ENCODE measurements at regions of chr10 and their contacts with region 1.

Region 1: DNA sequence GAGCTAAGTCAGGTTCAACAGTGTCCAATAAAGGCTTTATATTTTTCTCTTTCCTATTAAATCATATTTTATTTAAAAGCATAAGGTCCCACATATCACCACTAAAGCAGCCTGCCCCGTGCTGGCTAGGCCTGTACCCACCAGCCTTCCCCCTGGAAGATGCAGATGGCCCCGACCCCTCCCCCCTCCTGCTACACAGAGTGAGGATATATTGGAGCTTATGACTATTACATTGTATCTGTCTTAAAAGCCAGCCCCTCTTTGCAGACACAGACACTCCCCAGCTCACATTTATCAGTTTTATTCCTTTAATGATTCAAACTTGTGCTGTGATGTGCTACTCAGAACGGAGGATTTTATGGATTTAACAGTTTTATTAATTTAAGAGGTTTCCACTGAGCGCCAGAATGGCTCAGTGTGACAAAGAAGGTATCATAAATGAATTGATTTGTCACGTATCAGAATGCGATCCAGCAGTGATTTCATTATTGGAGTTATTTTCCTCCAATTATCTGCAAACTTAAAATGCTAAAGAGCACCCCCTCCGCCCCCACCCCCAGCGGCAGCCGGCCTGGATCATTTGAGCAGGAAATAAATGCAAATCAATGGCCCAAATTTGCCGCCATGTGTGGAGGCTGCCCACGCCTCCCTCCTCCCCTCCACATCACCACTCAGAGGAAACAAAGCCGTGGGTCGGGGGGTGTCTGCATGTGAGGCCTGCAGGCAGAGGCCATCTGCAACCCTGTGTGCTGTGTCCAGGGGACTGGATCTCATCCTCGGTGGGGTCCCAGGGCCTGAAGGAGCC is 72.6 kb upstream of the ZMIZ1 start:
- DNase-seq: no peak
- ATAC-seq: no peak
- H3K4me3 ChIP-seq: no peak overlapping the region
- H3K27ac ChIP-seq: no peak overlapping the region
- H3K4me1 ChIP-seq: no peaks in the 10 kb centered on the region
- H3K27me3 ChIP-seq: no peaks in the 10 kb centered on the region
- CTCF ChIP-seq: no peak

Region 2: DNA sequence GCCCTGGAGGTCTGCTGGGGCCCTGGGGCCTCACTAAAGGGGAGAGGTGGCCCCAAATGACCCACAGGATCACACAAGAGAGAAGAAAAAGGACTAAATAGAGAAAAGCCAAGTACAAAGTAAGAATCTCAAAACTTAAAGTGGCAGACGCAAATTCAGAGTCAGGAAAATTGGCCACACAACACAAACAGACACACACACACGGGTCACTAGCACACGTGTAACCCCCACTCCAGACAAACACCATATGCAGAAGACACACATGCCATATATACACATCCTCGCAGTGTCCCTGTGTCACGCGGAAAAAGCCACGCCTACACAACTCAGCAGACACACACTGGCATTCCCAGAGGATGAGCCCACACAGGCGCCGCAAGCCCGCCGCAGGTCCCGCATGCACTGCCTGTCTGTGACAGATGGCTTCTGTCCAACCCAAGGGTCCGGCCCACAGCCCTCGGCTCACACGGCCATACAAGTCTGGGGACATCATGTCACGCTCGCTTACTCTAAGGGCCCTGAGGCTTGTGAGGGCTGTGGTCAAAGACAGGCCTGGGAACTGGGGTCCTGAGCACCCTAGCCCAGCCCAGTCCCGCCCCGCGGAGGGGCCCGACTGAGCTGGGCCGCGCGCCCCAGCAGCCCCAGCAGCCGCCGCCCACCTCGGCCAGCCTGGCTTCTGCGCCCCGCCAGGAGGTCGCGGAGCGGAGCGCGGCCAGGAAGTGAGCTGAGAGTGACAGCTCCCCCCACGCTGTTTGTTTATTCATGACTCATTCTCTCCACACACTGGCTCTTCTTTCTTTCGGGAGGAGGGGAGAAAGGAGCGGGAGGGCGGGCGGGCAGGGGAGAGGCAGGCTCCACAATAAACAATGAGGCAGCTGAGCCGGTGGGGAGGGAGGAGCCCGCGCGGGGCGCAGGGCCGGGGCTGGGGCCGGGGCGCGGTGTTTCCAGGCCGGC is 23.0 kb before region 1 on chr10:
- CTCF ChIA-PET with region 1: no interaction called
- POLR2A ChIA-PET with region 1: no interaction called
- in situ Hi-C with region 1: no loop called
- intact Hi-C with region 1: no loop called
- DNase-seq: peak; percentile 70
- ATAC-seq: peak; percentile 82
- H3K4me3 ChIP-seq: peak overlapping the region; percentile 44 to 56
- H3K27ac ChIP-seq: peak overlapping the region; percentile 90
- H3K4me1 ChIP-seq: peaks cover 34% of the 10 kb centered on the region
- H3K27me3 ChIP-seq: no peaks in the 10 kb centered on the region
- CTCF ChIP-seq: no peak

Region 3: DNA sequence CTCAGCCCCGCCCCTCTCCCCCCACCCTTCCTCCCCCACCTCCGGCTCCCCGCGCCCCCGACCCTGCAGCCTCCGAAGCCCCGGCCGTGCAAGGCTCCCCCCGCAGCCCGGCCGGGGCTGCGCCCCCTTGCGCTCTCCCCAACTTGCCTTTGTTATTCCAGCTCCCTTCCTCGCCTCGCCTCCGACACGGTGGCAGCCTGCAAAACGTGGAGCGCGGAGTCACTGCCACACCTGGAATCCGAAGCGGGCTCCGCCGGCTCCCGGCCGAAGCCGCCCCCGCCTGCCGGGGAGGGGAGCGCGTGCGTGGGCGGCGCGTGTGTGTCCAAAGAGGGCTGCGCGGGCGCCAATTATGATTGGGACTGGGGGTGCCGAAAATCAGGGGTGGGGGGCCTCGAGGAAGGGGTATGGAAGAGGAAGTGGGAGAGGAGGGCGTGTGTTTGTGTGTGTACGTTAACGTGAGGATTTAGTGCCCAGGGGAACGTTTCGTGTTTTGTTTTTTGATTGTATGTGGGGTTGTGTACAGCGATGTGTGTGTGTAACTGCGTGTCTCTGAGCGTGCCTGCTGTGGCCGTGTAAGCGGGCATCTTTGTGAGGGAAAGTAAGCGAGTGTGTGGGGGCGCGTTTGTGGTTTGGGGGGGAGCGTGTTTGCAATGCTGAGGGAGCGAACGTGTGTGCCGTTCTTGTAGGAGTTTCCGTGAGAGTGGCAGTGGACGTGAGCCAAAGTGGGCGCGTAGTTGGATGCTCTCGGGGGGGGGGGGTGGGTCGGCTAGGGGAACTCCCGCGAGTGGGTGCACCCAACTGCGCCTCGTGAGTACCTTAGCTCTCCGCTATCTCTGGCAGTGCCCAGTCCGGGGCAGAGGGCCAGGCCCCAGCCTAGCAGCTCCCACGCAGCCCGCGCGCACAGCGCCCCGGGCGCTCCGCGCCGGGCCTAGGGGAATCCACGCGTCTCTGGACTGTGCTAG is 71.3 kb after region 1 on chr10:
- CTCF ChIA-PET with region 1: no interaction called
- POLR2A ChIA-PET with region 1: no interaction called
- in situ Hi-C with region 1: no loop called
- intact Hi-C with region 1: no loop called
- DNase-seq: no peak
- ATAC-seq: no peak
- H3K4me3 ChIP-seq: peak overlapping the region; percentile 88 to 93
- H3K27ac ChIP-seq: peak overlapping the region; percentile 60
- H3K4me1 ChIP-seq: peaks cover 26% of the 10 kb centered on the region
- H3K27me3 ChIP-seq: no peaks in the 10 kb centered on the region
- CTCF ChIP-seq: no peak; the same call in 1 of the 2 replicates

Region 4: DNA sequence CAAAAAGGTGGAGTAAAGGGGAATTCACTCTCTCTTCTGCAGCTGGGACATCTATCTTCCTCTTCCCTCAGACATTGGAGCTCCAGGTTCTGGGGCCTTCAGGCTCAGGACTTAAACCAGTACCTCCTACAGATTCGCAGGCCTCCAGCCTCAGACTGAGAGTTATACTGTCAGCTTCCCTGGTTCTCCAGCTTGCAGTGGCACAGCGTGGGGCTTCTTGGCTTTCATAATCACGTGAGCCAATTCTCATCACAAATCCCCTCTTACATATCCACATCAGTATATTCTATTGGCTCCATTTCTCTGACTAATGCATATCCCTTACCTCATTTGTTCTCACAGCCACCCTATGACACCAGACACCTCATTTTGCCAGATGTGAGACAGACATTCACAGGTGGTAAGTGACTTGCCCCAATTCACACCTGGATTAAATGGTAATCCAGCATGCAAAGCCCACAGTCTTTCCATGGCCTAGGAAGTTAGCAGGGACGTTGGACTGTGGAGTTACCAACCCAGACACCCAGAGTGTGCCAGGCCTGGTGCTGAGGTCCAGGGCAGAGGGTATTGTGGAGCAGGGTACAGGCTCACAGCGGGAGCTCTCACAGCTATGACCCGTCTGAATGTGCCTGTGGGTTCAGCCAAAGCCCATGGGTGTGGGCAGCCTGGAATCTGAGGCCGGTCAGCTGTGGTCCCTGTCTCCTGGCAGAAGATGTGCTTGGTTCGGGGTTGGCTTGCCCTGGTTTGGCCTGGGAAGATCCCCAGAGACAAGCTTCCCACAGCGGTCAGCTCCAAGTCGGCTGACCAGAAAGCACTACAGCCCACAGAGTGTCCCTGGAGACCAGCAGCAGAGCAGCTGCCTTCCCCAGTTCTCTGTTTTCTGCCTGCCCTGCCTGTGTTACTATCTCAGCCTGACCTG is 467.6 kb after region 1 on chr10:
- CTCF ChIA-PET with region 1: interaction called, 10 read pairs
- POLR2A ChIA-PET with region 1: no interaction called
- in situ Hi-C with region 1: no loop called
- intact Hi-C with region 1: no loop called
- DNase-seq: no peak
- ATAC-seq: no peak
- H3K4me3 ChIP-seq: no peak overlapping the region
- H3K27ac ChIP-seq: no peak overlapping the region
- H3K4me1 ChIP-seq: no peaks in the 10 kb centered on the region
- H3K27me3 ChIP-seq: peaks cover 12% of the 10 kb centered on the region
- CTCF ChIP-seq: no peak

Measured in Panc1 (cell line).